Naive thymus-derived CD4-positive, alpha-beta T cell (primary cell): ENCODE measurements at regions of chr20 and their contacts with region 1.

Region 1: DNA sequence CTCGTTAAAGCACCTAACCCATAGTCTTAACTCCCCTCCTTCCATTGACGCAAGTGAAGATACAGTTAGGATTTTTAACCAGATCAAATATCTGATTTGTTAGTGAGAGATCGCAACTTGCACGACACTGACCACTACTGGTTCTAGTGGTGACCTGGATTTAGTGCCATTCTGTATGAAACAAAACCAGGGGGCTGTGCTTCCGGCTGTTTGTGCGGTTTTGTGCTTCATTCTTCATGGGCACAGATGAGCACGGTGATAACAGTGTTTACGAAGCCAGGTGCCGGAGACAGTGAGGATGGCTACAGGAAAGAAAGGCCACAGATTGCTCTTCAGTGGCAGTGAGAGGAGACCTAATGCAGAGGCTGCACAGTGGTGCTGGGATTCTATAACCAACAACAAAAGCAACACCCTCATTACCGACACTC is 75.5 kb downstream of the NOL4L start:
- DNase-seq: peak in 7 of 9 donors; percentile 70 to 86 (median 81)
- ATAC-seq: peak; percentile 86
- H3K4me3 ChIP-seq: peak overlapping the region; percentile 54
- H3K4me3 Mint-ChIP-seq: peak overlapping the region; percentile 56 to 95 (median 90)
- H3K27ac ChIP-seq: peak overlapping the region; percentile 84
- H3K27ac Mint-ChIP-seq: peak overlapping the region; percentile 80 to 98 (median 97)
- H3K4me1 ChIP-seq: peaks cover 42 to 71% of the 10 kb centered on the region in 2 donors
- H3K4me1 Mint-ChIP-seq: peaks cover 54 to 90% (median 79%) of the 10 kb centered on the region in 7 donors
- H3K27me3 ChIP-seq: no peaks in the 10 kb centered on the region
- H3K27me3 Mint-ChIP-seq: no peaks in the 10 kb centered on the region

Region 2: DNA sequence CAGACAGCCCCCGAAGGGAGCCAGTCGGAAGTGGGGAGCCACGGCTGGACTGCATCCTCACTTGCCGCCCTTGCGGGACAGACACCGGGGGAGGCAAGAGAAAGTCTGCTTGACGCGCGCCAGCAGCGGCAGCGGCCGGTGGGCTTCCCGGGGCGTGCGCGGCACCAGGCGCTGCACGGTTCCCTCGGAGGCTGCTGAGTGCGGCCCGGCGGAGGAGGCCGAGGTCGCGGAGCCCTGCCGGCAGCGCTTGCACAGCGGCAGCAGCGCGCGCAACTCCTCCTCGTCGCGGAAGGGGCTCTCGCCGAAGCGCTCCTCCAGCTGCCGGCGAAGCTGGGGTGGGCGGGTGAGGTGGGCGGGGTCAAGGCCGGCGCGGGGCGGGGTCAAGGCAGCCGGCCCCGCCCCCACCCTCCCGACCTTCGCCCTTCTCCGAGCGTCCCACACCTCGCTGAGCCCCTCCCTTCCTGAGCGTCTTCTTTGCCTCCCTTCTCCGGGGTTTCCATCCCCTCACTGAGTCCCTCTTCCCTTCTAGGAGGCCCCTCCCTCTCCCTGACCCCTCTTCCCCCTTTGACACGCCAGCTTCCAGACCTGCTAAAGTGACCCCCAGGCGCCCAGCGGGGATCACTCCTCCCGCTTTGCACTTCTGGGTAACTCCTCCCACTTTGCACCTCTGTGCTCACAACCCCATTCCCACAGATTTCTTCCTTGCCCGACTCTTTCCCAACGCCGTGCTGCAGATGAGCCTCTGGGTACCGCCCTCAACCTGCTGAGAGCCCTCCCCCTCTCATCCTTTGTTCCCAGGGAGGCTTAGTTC is 648.1 kb before region 1 on chr20:
- CTCF ChIA-PET with region 1: no interaction called
- POLR2A ChIA-PET with region 1: no interaction called
- intact Hi-C with region 1: loop called in 1 of 2 experiments (anchors 10 kb)
- DNase-seq: peak; percentile 18 to 63 (median 49)
- ATAC-seq: peak; percentile 88
- H3K4me3 ChIP-seq: peak overlapping the region; percentile 48
- H3K4me3 Mint-ChIP-seq: peak overlapping the region; percentile 44 to 88 (median 69)
- H3K27ac ChIP-seq: no peak overlapping the region
- H3K27ac Mint-ChIP-seq: peak overlapping the region in 1 of 9 donors; percentile 24
- H3K4me1 ChIP-seq: peaks cover 4 to 12% of the 10 kb centered on the region in 2 donors
- H3K4me1 Mint-ChIP-seq: peaks cover 5 to 22% (median 11%) of the 10 kb centered on the region in 7 donors
- H3K27me3 ChIP-seq: peaks cover 0 to 10% of the 10 kb centered on the region in 2 donors
- H3K27me3 Mint-ChIP-seq: peaks cover 17 to 51% (median 31%) of the 10 kb centered on the region in 5 donors

Region 3: GRCh38 chr20:32336918-32337347 is 172.7 kb before region 1 on chr20:
- CTCF ChIA-PET with region 1: interaction called, 5 read pairs
- POLR2A ChIA-PET with region 1: no interaction called
- intact Hi-C with region 1: loop called in 1 of 2 experiments (anchors 1 kb)
- DNase-seq: peak in 7 of 9 donors; percentile 18 to 57 (median 35)
- ATAC-seq: peak; percentile 79
- H3K4me3 ChIP-seq: no peak overlapping the region
- H3K4me3 Mint-ChIP-seq: no peak overlapping the region
- H3K27ac ChIP-seq: no peak overlapping the region
- H3K27ac Mint-ChIP-seq: peak overlapping the region in 3 of 9 donors; percentile 5 to 75 (median 18)
- H3K4me1 ChIP-seq: peaks cover 5 to 13% of the 10 kb centered on the region in 2 donors
- H3K4me1 Mint-ChIP-seq: peaks cover 5 to 27% (median 8%) of the 10 kb centered on the region in 7 donors
- H3K27me3 ChIP-seq: no peaks in the 10 kb centered on the region
- H3K27me3 Mint-ChIP-seq: no peaks in the 10 kb centered on the region

Region 4: GRCh38 chr20:32443386-32443974 is 66.2 kb before region 1 on chr20:
- CTCF ChIA-PET with region 1: no interaction called
- POLR2A ChIA-PET with region 1: no interaction called
- intact Hi-C with region 1: loop called in 1 of 2 experiments (anchors 5 kb)
- DNase-seq: peak in 3 of 9 donors; percentile 16 to 21 (median 21)
- ATAC-seq: peak; percentile 43
- H3K4me3 ChIP-seq: no peak overlapping the region
- H3K4me3 Mint-ChIP-seq: no peak overlapping the region
- H3K27ac ChIP-seq: peak overlapping the region; percentile 49
- H3K27ac Mint-ChIP-seq: peak overlapping the region in 8 of 9 donors; percentile 63 to 89 (median 81)
- H3K4me1 ChIP-seq: peaks cover 0 to 5% of the 10 kb centered on the region in 2 donors
- H3K4me1 Mint-ChIP-seq: peaks cover 16 to 60% (median 31%) of the 10 kb centered on the region in 7 donors
- H3K27me3 ChIP-seq: no peaks in the 10 kb centered on the region
- H3K27me3 Mint-ChIP-seq: no peaks in the 10 kb centered on the region

Region 5: DNA sequence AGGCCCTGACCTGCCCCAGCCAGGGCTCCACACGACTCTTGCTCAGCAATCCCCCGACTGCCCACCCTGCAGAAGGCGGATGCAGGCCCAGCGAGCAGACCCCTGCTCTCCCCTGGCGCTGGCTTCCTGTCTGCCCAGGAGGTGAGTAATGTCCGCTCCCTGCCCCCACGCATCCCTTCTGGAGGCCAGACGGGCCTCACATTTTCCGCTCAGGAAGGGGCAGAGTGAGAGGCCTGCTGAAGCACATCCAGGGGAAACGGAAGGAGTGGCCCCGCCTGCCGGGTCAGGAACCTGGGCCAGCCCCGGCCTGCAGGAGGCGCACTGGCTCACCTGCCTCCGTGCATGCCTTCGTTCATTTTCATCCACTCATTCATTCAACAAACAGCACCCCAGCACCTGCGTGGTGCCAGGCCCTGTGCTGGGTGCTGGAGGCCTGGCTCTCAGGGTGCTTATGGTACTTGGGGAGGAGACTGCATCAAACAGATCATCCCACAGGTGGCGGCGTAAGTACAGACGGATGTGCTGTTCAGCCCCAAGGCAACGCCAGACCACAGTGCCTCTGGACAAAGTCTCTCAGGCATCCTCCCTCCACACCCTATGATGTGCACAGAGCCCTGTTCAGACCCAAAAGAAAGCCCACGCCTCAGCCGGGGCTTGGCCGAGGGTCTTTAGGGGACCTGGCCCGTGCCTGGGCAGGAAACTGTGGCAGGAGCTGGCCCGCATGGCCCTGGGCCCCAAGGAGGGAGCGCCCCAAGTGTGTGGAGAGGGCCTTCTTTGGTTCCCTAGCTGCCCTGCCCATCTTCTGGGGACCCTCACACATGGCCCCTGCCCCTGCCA is 39.4 kb before region 1 on chr20:
- CTCF ChIA-PET with region 1: interaction called, 3 read pairs
- POLR2A ChIA-PET with region 1: interaction called, 3 read pairs
- intact Hi-C with region 1: loop called in 1 of 2 experiments (anchors 1 kb)
- DNase-seq: peak in 2 of 9 donors; percentile 24 to 31
- ATAC-seq: peak; percentile 58
- H3K4me3 ChIP-seq: no peak overlapping the region
- H3K4me3 Mint-ChIP-seq: peak overlapping the region in 1 of 10 donors; percentile 1
- H3K27ac ChIP-seq: peak overlapping the region; percentile 30
- H3K27ac Mint-ChIP-seq: peak overlapping the region in 8 of 9 donors; percentile 36 to 89 (median 79)
- H3K4me1 ChIP-seq: no peaks in the 10 kb centered on the region
- H3K4me1 Mint-ChIP-seq: peaks cover 4 to 23% (median 17%) of the 10 kb centered on the region in 7 donors
- H3K27me3 ChIP-seq: no peaks in the 10 kb centered on the region
- H3K27me3 Mint-ChIP-seq: no peaks in the 10 kb centered on the region

Region 6: DNA sequence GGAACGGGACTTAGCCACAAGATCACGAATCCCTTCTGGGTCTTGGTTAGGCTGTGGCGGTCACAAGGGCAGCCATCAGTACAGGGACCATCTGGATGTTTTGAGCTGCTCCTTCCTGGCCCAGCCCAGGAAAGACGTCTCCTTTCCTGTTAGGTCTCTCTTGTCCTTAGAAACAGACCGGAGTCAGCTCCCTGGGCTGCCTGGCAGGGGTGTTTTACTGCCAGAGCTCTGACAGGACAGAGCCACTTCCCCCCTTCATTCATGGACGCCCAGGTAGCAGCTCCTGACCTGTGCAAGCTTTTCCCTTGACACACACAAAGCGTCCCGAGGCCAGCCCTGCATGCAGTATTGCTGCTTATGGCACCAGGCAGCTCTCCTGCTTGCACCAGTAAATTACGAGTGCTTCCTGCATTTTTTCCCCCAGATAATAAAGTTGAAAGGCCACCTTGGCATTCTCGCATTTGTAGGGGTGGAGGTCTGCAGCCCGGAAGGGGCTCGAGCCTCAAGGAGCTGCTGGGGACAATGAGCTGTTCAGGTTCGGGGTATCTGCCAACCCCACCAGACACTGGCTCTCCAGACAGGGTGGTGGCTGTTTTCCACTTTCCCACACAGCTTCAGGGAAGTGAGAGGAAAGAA is 11.9 kb before region 1 on chr20:
- CTCF ChIA-PET with region 1: interaction called, 6 read pairs
- POLR2A ChIA-PET with region 1: interaction called, 29 read pairs
- intact Hi-C with region 1: no loop called
- DNase-seq: no peak
- ATAC-seq: no peak
- H3K4me3 ChIP-seq: no peak overlapping the region
- H3K4me3 Mint-ChIP-seq: no peak overlapping the region
- H3K27ac ChIP-seq: peak overlapping the region; percentile 50
- H3K27ac Mint-ChIP-seq: peak overlapping the region in 8 of 9 donors; percentile 65 to 88 (median 74)
- H3K4me1 ChIP-seq: peaks cover 0 to 6% of the 10 kb centered on the region in 2 donors
- H3K4me1 Mint-ChIP-seq: peaks cover 8 to 71% (median 49%) of the 10 kb centered on the region in 7 donors
- H3K27me3 ChIP-seq: no peaks in the 10 kb centered on the region
- H3K27me3 Mint-ChIP-seq: no peaks in the 10 kb centered on the region

Region 7: GRCh38 chr20:32521780-32522525 is 12.3 kb after region 1 on chr20:
- CTCF ChIA-PET with region 1: interaction called, 10 read pairs
- POLR2A ChIA-PET with region 1: interaction called, 623 read pairs
- intact Hi-C with region 1: no loop called
- DNase-seq: peak; percentile 50 to 76 (median 63)
- ATAC-seq: peak; percentile 89
- H3K4me3 ChIP-seq: peak overlapping the region; percentile 27
- H3K4me3 Mint-ChIP-seq: peak overlapping the region in 9 of 10 donors; percentile 17 to 72 (median 53)
- H3K27ac ChIP-seq: peak overlapping the region; percentile 60
- H3K27ac Mint-ChIP-seq: peak overlapping the region; percentile 63 to 95 (median 90)
- H3K4me1 ChIP-seq: peaks cover 36 to 65% of the 10 kb centered on the region in 2 donors
- H3K4me1 Mint-ChIP-seq: peaks cover 39 to 77% (median 67%) of the 10 kb centered on the region in 7 donors
- H3K27me3 ChIP-seq: no peaks in the 10 kb centered on the region
- H3K27me3 Mint-ChIP-seq: no peaks in the 10 kb centered on the region

Region 8: DNA sequence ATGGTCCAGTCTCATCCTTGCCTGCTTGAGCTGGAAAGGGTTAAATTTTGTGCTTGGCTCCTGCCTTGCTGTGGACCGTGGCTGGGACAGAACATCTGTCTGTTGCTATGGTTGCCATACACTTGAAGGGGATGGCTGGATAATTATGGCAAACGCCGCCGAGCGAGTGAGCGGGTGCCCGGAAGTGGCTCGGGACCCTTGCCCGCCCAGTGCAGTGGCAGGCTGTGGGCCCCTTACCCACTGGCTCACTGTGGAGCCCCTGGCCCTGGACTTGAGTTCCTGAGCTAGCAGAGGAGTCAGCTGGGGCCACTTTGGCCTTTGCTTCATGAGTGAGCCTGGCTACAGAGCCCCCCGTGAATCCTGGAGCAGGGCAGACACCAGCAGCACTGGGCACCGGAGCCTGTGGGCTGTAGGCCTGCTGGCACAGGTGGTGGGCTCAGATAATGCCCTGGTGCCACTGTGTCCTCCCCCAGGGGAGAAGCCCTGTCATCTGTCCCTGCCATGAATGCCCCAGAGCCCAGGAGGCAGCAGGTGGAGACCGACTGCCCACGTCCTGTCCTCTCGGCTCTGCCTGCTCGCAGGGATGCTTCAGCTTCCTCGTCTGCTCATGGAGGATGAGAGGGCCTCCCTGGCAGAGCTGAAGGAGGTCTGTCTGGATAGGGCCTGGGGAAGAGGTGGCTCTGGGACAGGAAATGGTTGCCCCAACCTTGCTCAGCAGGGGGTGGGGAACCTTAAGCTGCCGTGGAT is 101.0 kb after region 1 on chr20:
- CTCF ChIA-PET with region 1: no interaction called
- POLR2A ChIA-PET with region 1: no interaction called
- intact Hi-C with region 1: no loop called
- DNase-seq: no peak
- ATAC-seq: no peak
- H3K4me3 ChIP-seq: no peak overlapping the region
- H3K4me3 Mint-ChIP-seq: no peak overlapping the region
- H3K27ac ChIP-seq: no peak overlapping the region
- H3K27ac Mint-ChIP-seq: no peak overlapping the region
- H3K4me1 ChIP-seq: peaks cover 0 to 6% of the 10 kb centered on the region in 2 donors
- H3K4me1 Mint-ChIP-seq: peaks cover 0 to 32% (median 24%) of the 10 kb centered on the region in 7 donors
- H3K27me3 ChIP-seq: no peaks in the 10 kb centered on the region
- H3K27me3 Mint-ChIP-seq: peaks cover 0 to 15% (median 0%) of the 10 kb centered on the region in 5 donors

Region 9: GRCh38 chr20:32621071-32621890 is 111.6 kb after region 1 on chr20:
- CTCF ChIA-PET with region 1: no interaction called
- POLR2A ChIA-PET with region 1: no interaction called
- intact Hi-C with region 1: no loop called
- DNase-seq: peak in 1 of 9 donors; percentile 22
- ATAC-seq: no peak
- H3K4me3 ChIP-seq: no peak overlapping the region
- H3K4me3 Mint-ChIP-seq: no peak overlapping the region
- H3K27ac ChIP-seq: no peak overlapping the region
- H3K27ac Mint-ChIP-seq: peak overlapping the region in 5 of 9 donors; percentile 1 to 75 (median 18)
- H3K4me1 ChIP-seq: peaks cover 0 to 3% of the 10 kb centered on the region in 2 donors
- H3K4me1 Mint-ChIP-seq: peaks cover 4 to 14% (median 9%) of the 10 kb centered on the region in 7 donors
- H3K27me3 ChIP-seq: no peaks in the 10 kb centered on the region
- H3K27me3 Mint-ChIP-seq: peaks cover 0 to 2% (median 0%) of the 10 kb centered on the region in 5 donors